ENCODE measurements at regions of chr12 and their contacts with region 1.

Region 1: GRCh38 chr12:45990468-45991283 is at the start of gene SCAF11:
- DNase-seq: peak; percentile 100

Region 2: DNA sequence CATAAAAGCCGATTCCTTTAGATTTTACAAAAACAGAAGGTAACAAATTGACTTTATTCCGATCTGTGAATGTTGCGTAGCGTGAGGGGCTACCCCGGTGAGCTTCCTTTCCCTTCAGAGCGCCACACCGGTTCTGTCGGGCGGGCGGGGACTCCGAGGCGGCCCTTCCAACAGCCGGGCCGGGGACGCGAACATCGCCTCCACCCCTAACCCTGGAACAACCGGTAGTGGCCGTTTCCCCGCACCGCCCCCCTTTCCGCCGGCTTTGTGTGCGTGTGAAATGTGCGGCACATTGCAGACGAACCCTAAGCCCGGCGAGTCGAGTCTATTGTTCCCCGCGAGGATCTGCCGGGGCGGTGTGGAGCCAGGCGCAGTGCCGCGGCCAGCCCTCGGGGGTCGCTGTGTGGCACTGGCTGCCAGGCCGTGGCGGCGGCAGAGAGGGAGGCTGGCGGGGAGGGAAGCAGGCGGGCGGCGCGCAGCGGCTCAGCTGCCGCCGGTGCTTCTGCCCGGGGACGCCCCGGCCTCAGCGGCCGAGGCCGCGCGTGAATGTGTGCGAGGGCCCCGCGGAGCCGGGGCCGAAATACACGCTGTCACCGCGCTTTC is 261.9 kb before region 1 on chr12:
- intact Hi-C with region 1: loop called (anchors 1 kb)
- DNase-seq: peak; percentile 93 to 99 (median 96)

Region 3: GRCh38 chr12:45762185-45763110 is 228.2 kb before region 1 on chr12:
- intact Hi-C with region 1: loop called (anchors 5 kb)
- DNase-seq: no peak

Region 4: DNA sequence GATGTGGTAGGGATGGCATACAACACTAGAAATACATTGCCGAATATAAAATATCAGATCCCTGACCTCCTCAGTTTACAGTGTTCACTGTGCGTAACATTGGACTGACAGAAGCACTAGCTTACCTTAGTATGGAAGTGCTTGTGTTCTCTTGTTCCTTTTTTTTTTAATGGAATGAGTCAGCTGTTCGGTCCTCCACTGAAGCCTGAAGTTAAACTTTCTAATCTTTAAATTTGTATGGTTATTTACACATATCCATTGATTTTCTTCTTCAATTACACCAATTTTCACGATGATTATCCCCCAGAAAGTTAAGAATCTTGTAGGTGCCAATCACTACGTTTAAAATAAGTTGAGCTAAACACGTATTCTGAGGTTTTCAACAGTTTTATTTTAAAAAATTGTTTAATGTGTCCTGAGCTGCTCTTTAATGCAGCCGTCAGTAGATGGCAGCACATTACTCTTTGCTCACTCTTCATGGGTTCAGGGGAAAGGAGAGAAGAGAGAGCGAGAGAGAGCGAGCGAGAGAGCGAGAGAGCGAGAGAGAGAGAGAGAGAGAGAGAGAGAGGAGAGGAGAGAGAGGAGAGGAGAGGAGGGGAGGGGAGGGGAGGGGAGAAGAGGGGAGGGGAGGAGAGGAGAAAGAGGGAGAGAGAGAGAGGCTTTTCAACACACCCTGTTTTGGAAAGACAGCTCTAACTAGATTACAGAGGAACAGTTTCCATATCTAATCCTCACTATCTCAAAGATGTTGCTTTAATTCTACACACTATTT is 134.4 kb after region 1 on chr12:
- intact Hi-C with region 1: loop called (anchors 10 kb)
- DNase-seq: peak in 7 of 10 donors; percentile 12 to 85 (median 57)

Region 5: DNA sequence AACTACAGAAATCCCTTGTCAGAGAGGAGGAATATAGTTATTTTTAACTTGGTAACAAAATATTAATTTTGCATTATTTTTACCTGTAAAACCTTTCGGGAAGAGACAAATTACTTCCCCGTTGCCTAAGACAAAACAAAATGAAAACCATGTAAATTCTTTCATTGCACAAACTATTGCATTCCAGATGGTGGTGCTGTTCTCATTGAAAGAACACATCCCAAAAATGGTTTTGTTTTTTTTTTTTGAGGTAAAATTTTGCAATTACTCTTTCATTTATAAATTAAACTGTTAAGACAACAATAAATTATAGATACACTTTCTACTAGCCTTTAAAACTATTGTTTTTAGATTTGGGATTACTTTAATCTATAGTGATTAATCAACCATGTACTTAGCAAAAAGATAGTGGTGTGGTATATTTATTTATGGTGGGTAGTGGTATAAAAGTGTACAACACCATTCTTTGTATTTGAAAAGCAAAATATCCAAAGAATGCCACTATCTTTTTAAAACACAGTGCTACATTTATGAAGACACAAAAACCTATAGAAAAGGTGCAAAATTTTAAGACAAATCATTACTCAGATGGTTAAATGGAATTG is 162.7 kb after region 1 on chr12:
- intact Hi-C with region 1: loop called (anchors 10 kb)
- DNase-seq: no peak

Region 6: DNA sequence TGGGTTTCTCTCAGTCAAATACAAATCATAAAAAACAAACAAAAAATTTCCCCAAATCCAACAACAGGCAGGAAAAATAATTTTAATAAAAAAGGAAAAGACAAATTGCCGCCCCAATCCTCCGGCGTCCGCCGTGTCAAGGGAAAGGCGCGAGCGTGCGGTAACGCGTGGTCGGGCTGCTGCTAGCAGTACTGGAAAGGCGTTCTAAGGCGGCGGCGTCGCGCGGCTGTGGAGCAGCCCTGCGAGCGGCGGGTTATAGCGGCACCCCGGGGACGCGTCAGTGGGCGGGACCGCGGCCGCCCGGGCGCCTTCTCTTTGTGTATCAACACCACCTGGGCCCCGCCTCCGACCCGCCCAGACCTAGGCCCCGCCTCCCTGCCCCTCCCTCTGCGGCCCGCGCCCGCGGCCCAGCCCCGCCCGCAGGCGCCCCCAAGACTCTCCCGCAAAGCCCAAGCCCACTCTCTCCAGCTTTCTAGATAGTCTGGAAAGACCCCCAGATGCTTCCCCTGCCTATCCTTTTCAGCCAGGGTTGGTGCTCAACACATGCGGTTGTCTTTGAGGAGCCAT is 382.0 kb after region 1 on chr12 and contains the start of gene SLC38A2:
- intact Hi-C with region 1: loop called (anchors 5 kb)
- DNase-seq: peak; percentile 95 to 100 (median 98)

Measured in posterior cingulate gyrus (tissue), 11 donors.